Psoas muscle (tissue), 8 donors: ENCODE measurements at regions of chr4 and their contacts with region 1.

Region 1: DNA sequence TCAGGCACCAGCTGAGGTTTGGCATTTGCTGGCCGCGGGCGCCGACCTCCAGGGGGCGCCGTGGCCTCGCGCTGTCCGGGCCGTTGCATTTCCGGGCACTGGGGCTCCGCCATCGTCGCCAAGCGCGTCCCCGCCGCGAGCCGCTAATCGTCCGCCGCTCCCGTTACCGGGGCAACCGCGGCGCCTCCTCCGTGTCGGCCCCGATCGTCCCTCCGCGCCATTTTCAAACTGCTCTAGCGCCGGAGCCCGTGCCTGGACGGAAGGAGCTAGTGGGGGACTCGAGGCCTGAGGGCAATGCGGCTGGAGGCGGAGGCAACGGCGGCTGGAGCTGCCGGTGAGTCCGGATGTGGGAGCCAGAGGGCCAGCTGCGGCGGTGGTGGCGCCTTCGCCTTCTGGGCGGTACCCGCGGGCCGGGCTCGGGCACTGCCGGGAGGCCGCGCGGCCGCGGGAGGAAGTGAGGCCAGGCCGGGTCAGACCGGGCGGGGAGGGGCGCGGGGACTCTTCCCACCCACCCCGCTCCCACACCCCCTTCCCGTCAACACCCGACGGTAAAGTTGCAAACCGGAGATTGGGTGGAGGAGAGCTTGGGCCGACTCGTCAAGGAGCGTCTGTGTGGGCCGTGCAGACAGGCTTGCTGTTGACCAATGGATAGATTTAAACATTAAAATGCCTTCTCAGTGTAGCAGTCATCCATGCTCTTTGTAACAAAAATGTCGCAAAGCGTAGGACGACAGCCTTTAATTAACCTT is at the start of gene CEP135:
- DNase-seq: peak; percentile 95 to 98
- ATAC-seq: peak; percentile 98 to 100 (median 98)
- H3K4me3 ChIP-seq: peak within 1 kb of the TSS; percentile 83
- H3K27ac ChIP-seq: peak within 1 kb of the TSS; percentile 81
- H3K4me1 ChIP-seq: peaks cover 3% of the 10 kb centered on the region
- H3K27me3 ChIP-seq: no peaks in the 10 kb centered on the region
- CTCF ChIP-seq: peak; percentile 94
- total RNA-seq, gene CEP135: 1.1 to 1.8 (median 1.7) TPM

Region 2: GRCh38 chr4:56301181-56302076 is 352.5 kb after region 1 on chr4:
- intact Hi-C with region 1: loop called (anchors 2 to 5 kb)
- DNase-seq: peak in 1 of 2 donors; percentile 30
- ATAC-seq: peak; percentile 74 to 91 (median 86)
- H3K4me3 ChIP-seq: no peak overlapping the region
- H3K27ac ChIP-seq: no peak overlapping the region
- H3K4me1 ChIP-seq: no peaks in the 10 kb centered on the region
- H3K27me3 ChIP-seq: no peaks in the 10 kb centered on the region
- CTCF ChIP-seq: peak; percentile 76